A549 (cell line): ENCODE measurements at regions of chr1 and their contacts with region 1.

Region 1: DNA sequence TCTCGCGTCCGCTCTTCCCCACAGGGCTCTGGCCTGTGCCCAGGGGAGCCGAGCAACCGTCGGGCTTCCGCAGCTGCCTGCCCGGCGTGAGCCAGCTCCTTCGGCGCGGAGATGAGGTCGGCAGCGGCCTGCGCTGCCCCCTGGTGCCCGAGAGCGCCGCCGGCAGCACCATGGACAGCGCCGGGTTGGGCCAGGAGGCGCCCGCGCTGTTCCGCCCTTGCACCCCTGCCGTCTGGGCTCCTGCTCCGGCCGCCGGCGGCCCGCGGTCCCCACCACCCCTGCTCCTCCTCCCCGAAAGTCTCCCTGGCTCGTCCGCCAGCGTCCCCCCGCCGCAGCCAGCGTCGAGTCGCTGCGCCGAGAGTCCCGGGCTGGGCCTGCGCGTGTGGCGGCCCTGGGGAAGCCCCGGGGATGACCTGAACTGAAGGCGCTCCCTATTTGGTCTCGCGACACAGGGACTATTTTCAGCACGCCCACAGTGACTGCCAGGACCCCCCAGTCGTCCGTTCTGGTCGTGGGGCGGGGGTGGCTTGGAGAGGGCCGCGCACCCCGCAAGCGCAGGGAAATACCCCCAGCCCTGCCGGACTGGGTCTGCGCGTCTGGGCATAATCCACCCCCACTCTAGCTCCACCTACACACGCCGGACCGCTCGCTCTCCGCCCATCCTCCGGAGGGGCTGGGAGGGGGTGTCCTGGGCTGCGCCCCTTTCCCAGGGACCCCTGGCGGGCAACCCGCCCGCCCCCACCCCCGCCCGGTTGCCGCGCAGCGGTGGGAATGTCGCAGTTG is 1.3 kb downstream of the HES3 start:
- DNase-seq: peak; percentile 68 to 78
- ATAC-seq: peak; percentile 67 to 79
- H3K4me3 ChIP-seq: peak overlapping the region; percentile 40
- H3K27ac ChIP-seq: no peak overlapping the region
- H3K4me1 ChIP-seq: peaks cover 6% of the 10 kb centered on the region; the same call in 2 of the 3 replicates
- CTCF ChIP-seq: peak; percentile 55
- EP300 ChIP-seq: no peak
- POLR2A ChIP-seq: no peak
- RAD21 ChIP-seq: peak; percentile 24 to 53

Region 2: GRCh38 chr1:6191968-6192367 is 53.3 kb before region 1 on chr1:
- CTCF ChIA-PET with region 1: no interaction called
- POLR2A ChIA-PET with region 1: no interaction called
- DNase-seq: no peak
- ATAC-seq: no peak
- H3K4me3 ChIP-seq: no peak overlapping the region
- H3K27ac ChIP-seq: no peak overlapping the region
- H3K4me1 ChIP-seq: peaks cover 8% of the 10 kb centered on the region
- CTCF ChIP-seq: no peak
- EP300 ChIP-seq: no peak
- POLR2A ChIP-seq: no peak
- RAD21 ChIP-seq: no peak

Region 3: GRCh38 chr1:6259491-6260425 is 14.5 kb after region 1 on chr1:
- CTCF ChIA-PET with region 1: interaction called, 64 read pairs
- POLR2A ChIA-PET with region 1: no interaction called
- DNase-seq: peak; percentile 68 to 70
- ATAC-seq: peak; percentile 37 to 71
- H3K4me3 ChIP-seq: peak overlapping the region; percentile 57
- H3K27ac ChIP-seq: peak overlapping the region; percentile 56 to 82; a peak in 5 of 6 replicates
- H3K4me1 ChIP-seq: peaks cover 3% of the 10 kb centered on the region; the same call in 1 of the 3 replicates
- CTCF ChIP-seq: no peak
- EP300 ChIP-seq: no peak
- POLR2A ChIP-seq: no peak
- RAD21 ChIP-seq: no peak

Region 4: DNA sequence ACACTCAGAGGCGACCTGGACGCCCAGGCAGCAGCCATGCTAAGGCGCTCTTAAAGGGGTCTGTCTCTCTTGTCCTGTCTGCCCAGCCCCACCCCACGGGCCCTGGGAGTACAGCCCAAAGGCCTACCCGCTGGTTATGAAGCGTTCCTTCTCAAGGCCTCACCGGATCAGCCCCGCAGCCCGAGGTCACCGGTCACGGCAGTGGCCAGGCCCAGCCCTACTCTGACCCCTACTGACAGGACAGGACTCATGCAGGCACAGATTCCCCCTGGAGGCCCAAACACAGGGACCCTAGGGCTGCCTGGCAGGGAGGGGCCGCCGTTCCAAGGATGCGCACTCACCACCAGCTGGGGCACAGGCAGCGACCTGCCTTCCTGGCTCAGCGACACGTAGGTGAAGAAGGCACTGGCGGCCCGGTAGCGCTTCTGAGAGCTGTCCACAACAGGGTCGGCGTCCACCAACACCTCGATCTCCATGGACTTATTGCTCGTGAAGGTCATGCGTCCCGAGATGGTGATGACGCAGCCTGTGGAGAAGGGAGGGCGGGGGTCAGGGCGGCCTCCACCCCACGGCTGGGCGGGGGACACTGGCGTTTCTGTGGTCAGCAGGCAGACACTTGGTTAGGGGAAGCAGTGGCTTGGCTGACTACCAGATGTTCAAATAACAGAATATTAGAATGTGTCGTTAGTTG is 35.6 kb after region 1 on chr1:
- CTCF ChIA-PET with region 1: interaction called, 17 read pairs
- POLR2A ChIA-PET with region 1: no interaction called
- DNase-seq: peak; percentile 23 to 35
- ATAC-seq: peak; percentile 68 to 85; a peak in 5 of 6 replicates
- H3K4me3 ChIP-seq: no peak overlapping the region
- H3K27ac ChIP-seq: no peak overlapping the region
- H3K4me1 ChIP-seq: no peaks in the 10 kb centered on the region
- CTCF ChIP-seq: 0 out of 3 replicates have a peak, but pooled peaks have one; percentile 11
- EP300 ChIP-seq: no peak
- POLR2A ChIP-seq: no peak
- RAD21 ChIP-seq: peak; percentile 13 to 22; a peak in 1 of 5 replicates

Region 5: GRCh38 chr1:6343506-6344405 is 98.5 kb after region 1 on chr1:
- CTCF ChIA-PET with region 1: interaction called, 250 read pairs
- POLR2A ChIA-PET with region 1: no interaction called
- DNase-seq: peak; percentile 66 to 89
- ATAC-seq: peak; percentile 86 to 93
- H3K4me3 ChIP-seq: no peak overlapping the region
- H3K27ac ChIP-seq: peak overlapping the region; percentile 43 to 77; a peak in 5 of 6 replicates
- H3K4me1 ChIP-seq: peaks cover 19% of the 10 kb centered on the region
- CTCF ChIP-seq: peak; percentile 75
- EP300 ChIP-seq: no peak
- POLR2A ChIP-seq: no peak
- RAD21 ChIP-seq: peak; percentile 83 to 86

Region 6: GRCh38 chr1:6393400-6394187 is 148.3 kb after region 1 on chr1 and contains the start of gene ACOT7:
- CTCF ChIA-PET with region 1: interaction called, 26 read pairs
- POLR2A ChIA-PET with region 1: interaction called, 4 read pairs
- DNase-seq: peak; percentile 68 to 89
- ATAC-seq: peak; percentile 93 to 94
- H3K4me3 ChIP-seq: peak within 1 kb of the TSS; percentile 52
- H3K27ac ChIP-seq: peak within 1 kb of the TSS; percentile 86 to 93
- H3K4me1 ChIP-seq: peaks cover 9% of the 10 kb centered on the region
- CTCF ChIP-seq: no peak
- EP300 ChIP-seq: no peak
- POLR2A ChIP-seq: peak; percentile 20; the same call in 1 of the 2 replicates
- RAD21 ChIP-seq: no peak
- polyA plus RNA-seq, gene ACOT7: 49.6 and 50.9 TPM in 2 replicates

Region 7: GRCh38 chr1:6414443-6414844 is 169.2 kb after region 1 on chr1:
- CTCF ChIA-PET with region 1: interaction called, 15 read pairs
- POLR2A ChIA-PET with region 1: no interaction called
- DNase-seq: peak; percentile 53 to 59
- ATAC-seq: peak; percentile 77 to 80
- H3K4me3 ChIP-seq: no peak overlapping the region
- H3K27ac ChIP-seq: peak overlapping the region; percentile 72 to 82
- H3K4me1 ChIP-seq: peaks cover 42% of the 10 kb centered on the region
- CTCF ChIP-seq: peak; percentile 40
- EP300 ChIP-seq: no peak
- POLR2A ChIP-seq: no peak
- RAD21 ChIP-seq: no peak

Region 8: DNA sequence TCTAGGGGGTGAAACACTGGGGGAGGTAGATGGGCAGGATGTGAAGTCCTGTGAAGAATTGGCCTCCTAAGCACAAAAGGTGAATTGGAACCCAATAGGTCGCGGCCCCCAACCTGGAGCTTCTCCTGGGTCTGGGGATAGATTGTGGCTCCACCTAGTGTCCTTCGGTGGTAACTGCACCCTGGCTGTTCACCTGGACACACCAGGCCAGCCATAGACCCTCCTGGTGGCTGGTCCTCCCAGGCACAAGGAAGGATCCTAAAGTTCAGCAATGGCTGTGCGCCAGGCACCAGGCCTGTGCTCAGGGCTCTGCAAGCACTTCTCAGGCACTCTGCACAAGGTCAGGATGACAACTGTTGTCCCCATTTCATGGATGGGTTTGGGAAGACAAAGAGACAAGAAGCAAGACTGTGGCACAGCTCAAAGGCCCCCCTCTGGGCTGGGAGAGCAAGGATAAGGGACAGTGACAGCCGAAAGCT is 192.8 kb after region 1 on chr1:
- CTCF ChIA-PET with region 1: interaction called, 39 read pairs
- POLR2A ChIA-PET with region 1: no interaction called
- DNase-seq: peak; percentile 73 to 76
- ATAC-seq: peak; percentile 74 to 83
- H3K4me3 ChIP-seq: no peak overlapping the region
- H3K27ac ChIP-seq: no peak overlapping the region
- H3K4me1 ChIP-seq: peaks cover 5% of the 10 kb centered on the region; the same call in 1 of the 3 replicates
- CTCF ChIP-seq: peak; percentile 56
- EP300 ChIP-seq: no peak
- POLR2A ChIP-seq: no peak
- RAD21 ChIP-seq: peak; percentile 50 to 51; a peak in 4 of 5 replicates

Region 9: DNA sequence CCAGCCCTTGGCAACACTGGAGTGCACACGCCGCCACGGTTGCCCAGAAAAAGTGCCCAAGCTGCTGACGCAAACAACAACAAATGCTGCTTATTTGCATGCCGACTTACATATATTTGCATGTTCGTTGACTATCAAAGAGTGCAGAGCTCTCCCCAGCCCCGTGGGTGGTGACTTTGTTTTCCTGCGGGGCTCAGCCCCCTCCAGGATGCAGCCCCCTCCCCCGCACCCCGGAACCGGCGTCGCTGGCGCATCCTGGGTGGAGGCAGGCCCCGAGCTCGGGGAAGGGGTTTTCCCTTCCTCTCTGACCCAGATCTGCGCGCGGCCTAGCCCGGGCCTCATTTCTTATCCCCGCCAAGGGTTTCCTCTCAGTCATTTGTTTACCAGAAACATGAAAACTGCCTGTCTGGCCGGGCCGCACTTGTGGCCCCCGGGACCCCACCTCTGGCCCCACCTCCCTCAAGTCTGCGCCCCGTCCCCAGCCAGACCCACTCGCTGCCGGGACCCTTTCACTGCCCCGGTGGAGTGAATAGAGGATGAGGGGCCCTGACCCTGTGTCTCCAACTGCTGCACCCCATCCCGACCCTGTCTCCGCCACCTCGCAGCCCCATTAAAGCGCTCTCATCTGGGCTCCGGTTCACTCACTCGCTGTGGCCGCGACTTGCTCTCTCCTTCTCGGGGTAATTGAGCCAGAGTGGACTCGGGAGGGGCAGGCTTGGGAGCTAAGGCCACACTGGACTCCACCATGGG is 215.2 kb after region 1 on chr1:
- CTCF ChIA-PET with region 1: no interaction called
- POLR2A ChIA-PET with region 1: no interaction called
- DNase-seq: no peak
- ATAC-seq: no peak
- H3K4me3 ChIP-seq: no peak overlapping the region
- H3K27ac ChIP-seq: no peak overlapping the region
- H3K4me1 ChIP-seq: no peaks in the 10 kb centered on the region; the same call in 2 of the 3 replicates
- CTCF ChIP-seq: no peak
- EP300 ChIP-seq: no peak
- POLR2A ChIP-seq: no peak
- RAD21 ChIP-seq: no peak